ENCODE measurements at regions of chr1 and their contacts with region 1.

Region 1: GRCh38 chr1:96688767-96689166 is 32.8 kb upstream of the PTBP2 start:
- DNase-seq: no peak
- H3K4me3 ChIP-seq: no peak overlapping the region
- H3K27ac ChIP-seq: no peak overlapping the region
- H3K4me1 ChIP-seq: no peaks in the 10 kb centered on the region
- H3K27me3 ChIP-seq: no peaks in the 10 kb centered on the region
- CTCF ChIP-seq: no peak
- POLR2A ChIP-seq: no peak

Region 2: DNA sequence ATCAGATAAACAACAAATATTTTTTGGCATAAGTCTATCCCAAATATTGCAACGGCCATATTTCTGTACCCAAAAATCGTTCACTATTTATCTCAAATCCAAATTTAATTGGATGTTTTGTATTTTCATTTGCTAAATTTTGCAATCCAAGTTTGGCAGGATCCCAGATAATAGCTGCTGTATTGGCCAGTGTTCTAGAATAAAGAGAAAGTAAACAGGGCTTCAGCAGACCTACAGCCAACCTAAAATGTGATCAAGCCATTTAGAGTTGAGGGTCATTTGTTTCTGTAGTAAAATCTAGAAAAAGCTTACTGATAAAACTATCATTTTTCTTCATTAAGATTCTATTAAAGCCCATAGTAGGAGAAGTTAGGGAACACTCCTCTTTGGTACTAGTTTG is 473.8 kb before region 1 on chr1:
- intact Hi-C with region 1: no loop called
- DNase-seq: no peak
- H3K4me3 ChIP-seq: no peak overlapping the region
- H3K27ac ChIP-seq: no peak overlapping the region
- H3K4me1 ChIP-seq: no peaks in the 10 kb centered on the region
- H3K27me3 ChIP-seq: no peaks in the 10 kb centered on the region
- CTCF ChIP-seq: no peak
- POLR2A ChIP-seq: no peak

Region 3: DNA sequence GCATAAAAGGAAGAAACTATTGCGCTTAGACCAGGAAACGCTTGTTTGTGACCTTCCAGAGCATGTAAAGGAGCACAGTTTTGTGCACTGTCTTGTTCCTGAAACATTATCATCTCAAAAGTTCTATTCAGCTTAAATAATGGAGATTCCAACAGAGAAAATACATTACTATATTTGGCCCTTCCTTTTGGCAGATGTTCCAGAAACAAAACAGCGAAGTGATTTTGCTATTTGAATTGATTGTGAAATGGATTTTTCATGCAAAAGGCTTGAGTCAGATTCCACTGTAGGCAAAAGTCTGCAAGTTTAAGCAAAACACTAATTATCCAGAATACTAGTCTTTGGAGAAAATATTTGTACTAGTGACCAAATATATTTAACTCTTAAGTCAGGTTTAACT is 47.5 kb before region 1 on chr1:
- intact Hi-C with region 1: no loop called
- DNase-seq: no peak
- H3K4me3 ChIP-seq: no peak overlapping the region
- H3K27ac ChIP-seq: no peak overlapping the region
- H3K4me1 ChIP-seq: no peaks in the 10 kb centered on the region
- H3K27me3 ChIP-seq: no peaks in the 10 kb centered on the region
- CTCF ChIP-seq: no peak
- POLR2A ChIP-seq: no peak

Region 4: DNA sequence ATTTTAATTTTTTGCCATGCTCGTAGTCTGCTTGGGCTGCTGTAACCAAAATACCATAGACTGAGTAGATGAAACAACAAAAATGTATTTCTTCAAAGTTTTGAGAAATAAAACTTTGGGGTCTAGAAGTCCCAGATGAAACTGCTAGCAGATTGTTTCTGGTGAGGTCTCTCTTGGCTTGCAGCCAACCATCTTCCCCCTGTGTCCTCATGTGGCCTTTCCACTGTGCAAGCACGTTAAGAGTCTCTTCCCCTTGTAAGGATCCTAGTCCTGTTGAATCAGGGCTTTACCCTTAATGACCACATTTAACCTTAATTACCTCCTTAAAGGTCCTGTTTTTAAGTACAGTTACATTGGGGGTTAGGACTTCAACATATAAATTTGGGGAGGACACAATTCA is 119.4 kb after region 1 on chr1:
- intact Hi-C with region 1: loop called (anchors 10 kb)
- DNase-seq: no peak
- H3K4me3 ChIP-seq: no peak overlapping the region
- H3K27ac ChIP-seq: no peak overlapping the region
- H3K4me1 ChIP-seq: no peaks in the 10 kb centered on the region
- H3K27me3 ChIP-seq: no peaks in the 10 kb centered on the region
- CTCF ChIP-seq: no peak
- POLR2A ChIP-seq: no peak

Measured in breast epithelium (tissue), 4 donors.